BJ (cell line): ENCODE measurements at regions of chr2 and their contacts with region 1.

Region 1: GRCh38 chr2:25851740-25852503 is 26.4 kb downstream of the ASXL2 start:
- DNase-seq: peak; percentile 55
- H3K4me3 ChIP-seq: no peak overlapping the region
- H3K27me3 ChIP-seq: no peaks in the 10 kb centered on the region
- CTCF ChIP-seq: peak; percentile 61

Region 2: DNA sequence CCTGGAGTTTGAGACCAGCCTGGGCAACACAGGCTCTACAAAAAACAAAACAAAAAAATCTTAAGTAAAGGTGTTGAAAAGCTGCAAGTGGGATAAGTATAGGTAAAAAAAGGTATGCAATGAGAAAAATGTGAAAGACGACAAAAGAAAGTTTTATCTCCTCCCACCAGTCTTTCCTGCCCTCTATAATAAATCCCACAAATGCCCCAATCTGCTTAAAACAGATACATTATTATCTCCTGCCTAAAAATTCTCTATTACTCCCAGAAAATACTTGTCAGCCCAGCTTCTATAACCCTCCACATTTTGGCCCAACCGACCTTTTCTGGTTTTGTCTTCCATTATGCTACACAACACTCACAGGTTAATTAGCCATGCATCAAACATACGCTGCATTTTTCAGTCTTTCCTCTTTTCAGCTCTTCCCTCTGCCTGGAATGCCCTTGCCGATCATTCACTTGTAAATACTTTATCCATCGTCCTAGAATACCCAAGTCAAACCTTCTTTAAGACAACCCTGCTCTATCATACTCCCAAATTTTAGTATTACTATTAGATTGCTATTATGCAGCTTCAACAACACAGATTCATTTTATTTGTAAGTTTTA is 15.6 kb after region 1 on chr2:
- CTCF ChIA-PET with region 1: interaction called, 13 read pairs
- POLR2A ChIA-PET with region 1: no interaction called
- DNase-seq: no peak
- H3K4me3 ChIP-seq: no peak overlapping the region
- H3K27me3 ChIP-seq: no peaks in the 10 kb centered on the region
- CTCF ChIP-seq: no peak

Region 3: GRCh38 chr2:25951071-25951547 is 99.2 kb after region 1 on chr2:
- CTCF ChIA-PET with region 1: interaction called, 15 read pairs
- POLR2A ChIA-PET with region 1: no interaction called
- DNase-seq: peak; percentile 21
- H3K4me3 ChIP-seq: no peak overlapping the region
- H3K27me3 ChIP-seq: no peaks in the 10 kb centered on the region
- CTCF ChIP-seq: peak; percentile 94